ENCODE measurements at regions of chrX and their contacts with region 1.

Region 1: DNA sequence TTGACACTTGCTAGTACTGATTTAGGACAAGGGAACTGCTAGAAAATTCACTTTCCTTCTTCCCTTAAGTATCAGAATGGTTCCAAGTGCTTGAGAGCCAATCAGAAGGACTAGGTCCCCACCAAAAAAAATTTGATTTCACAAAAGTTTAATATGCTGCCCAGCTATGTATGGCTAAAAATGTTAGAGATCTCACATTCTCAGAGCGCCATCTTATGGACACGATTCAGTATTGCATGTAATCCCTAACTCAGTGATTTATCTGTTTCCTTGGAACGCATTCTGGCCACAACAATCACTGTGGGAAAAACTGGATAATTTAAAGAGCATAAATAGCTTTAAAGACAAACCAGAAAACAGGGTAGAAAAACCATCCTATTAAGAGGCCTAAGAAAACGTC is 255.1 kb upstream of the GPC4 start:
- DNase-seq: peak; percentile 13
- H3K4me3 Mint-ChIP-seq: no peak overlapping the region
- H3K27ac Mint-ChIP-seq: no peak overlapping the region
- H3K4me1 Mint-ChIP-seq: no peaks in the 10 kb centered on the region
- H3K27me3 Mint-ChIP-seq: no peaks in the 10 kb centered on the region

Region 2: DNA sequence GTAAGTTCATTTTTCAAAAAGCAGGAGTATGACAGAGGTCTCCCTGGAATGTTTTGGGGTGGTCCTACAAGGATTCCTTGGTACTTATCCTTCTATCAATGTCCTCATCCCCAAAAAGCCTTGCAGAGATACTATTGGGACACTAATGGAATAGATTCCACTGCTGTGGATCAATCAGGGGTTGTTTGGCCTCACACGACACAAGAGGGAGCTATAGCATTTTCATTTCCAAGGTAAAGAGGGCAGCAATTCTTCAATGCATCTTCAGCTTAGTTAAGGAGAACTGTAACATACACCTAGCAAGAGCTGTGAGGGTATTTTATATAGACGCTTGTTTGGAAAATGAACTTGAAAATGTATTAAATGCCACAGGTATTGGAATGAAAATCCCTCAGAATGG is 624.4 kb before region 1 on chrX:
- CTCF ChIA-PET with region 1: no interaction called
- intact Hi-C with region 1: loop called (anchors 5 kb)
- DNase-seq: no peak
- H3K4me3 Mint-ChIP-seq: no peak overlapping the region
- H3K27ac Mint-ChIP-seq: no peak overlapping the region
- H3K4me1 Mint-ChIP-seq: no peaks in the 10 kb centered on the region
- H3K27me3 Mint-ChIP-seq: no peaks in the 10 kb centered on the region

Region 3: DNA sequence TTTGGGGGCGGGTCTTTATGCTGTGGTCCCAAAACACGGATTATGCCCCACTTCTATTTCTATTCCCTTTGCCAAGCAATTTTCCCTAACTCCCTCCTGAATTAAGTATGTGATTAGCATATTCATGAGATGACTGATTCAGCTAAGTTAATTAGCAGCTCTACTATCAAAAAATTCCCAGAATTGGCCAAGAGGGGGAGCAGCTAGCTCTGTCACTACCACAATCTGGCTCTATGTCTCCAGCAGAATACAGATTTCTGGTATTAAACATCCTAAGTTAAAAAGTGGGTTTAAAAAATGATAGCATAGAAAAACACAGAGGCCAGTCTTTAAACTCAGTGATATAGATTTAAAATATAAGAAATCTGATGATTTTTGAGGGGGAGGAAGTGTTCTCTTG is 335.4 kb before region 1 on chrX:
- CTCF ChIA-PET with region 1: interaction called, 19 read pairs
- intact Hi-C with region 1: loop called (anchors 1 kb)
- DNase-seq: peak; percentile 19
- H3K4me3 Mint-ChIP-seq: no peak overlapping the region
- H3K27ac Mint-ChIP-seq: no peak overlapping the region
- H3K4me1 Mint-ChIP-seq: no peaks in the 10 kb centered on the region
- H3K27me3 Mint-ChIP-seq: no peaks in the 10 kb centered on the region

Region 4: GRCh38 chrX:133544115-133544514 is 126.3 kb before region 1 on chrX:
- CTCF ChIA-PET with region 1: no interaction called
- intact Hi-C with region 1: no loop called
- DNase-seq: no peak
- H3K4me3 Mint-ChIP-seq: no peak overlapping the region
- H3K27ac Mint-ChIP-seq: no peak overlapping the region
- H3K4me1 Mint-ChIP-seq: no peaks in the 10 kb centered on the region
- H3K27me3 Mint-ChIP-seq: no peaks in the 10 kb centered on the region

Region 5: DNA sequence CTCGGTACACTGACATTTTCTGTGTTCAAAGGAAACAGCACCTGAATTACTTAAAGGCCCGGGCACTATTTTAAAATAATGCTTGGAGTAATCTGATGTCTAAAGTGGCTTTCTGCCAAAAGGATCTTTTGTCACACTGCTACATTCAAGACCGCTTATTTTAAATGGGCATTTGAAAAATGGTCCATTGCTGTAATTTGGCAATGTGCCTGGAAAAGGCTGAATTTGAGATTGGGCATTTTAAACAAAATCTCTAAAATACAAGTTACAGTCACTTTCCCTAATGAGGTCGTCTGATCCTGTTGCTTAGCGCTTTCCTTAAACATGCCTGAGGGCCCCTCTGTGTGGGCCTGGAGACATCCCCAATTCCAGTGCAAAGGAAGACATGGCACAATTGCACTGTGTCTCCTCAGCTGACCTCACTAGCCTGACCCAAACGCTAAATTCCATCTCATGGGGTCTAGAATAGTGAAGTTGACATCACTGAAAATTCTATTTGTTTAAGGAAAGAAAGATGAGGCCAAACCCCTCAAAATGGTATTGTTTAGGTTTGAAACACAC is 100.8 kb after region 1 on chrX:
- CTCF ChIA-PET with region 1: no interaction called
- intact Hi-C with region 1: no loop called
- DNase-seq: no peak
- H3K4me3 Mint-ChIP-seq: no peak overlapping the region
- H3K27ac Mint-ChIP-seq: no peak overlapping the region
- H3K4me1 Mint-ChIP-seq: no peaks in the 10 kb centered on the region
- H3K27me3 Mint-ChIP-seq: no peaks in the 10 kb centered on the region

Region 6: GRCh38 chrX:134095366-134095765 is 425.0 kb after region 1 on chrX:
- CTCF ChIA-PET with region 1: no interaction called
- intact Hi-C with region 1: no loop called
- DNase-seq: no peak
- H3K4me3 Mint-ChIP-seq: no peak overlapping the region
- H3K27ac Mint-ChIP-seq: no peak overlapping the region
- H3K4me1 Mint-ChIP-seq: no peaks in the 10 kb centered on the region
- H3K27me3 Mint-ChIP-seq: no peaks in the 10 kb centered on the region